ENCODE measurements at regions of chr13 and their contacts with region 1.

Region 1: DNA sequence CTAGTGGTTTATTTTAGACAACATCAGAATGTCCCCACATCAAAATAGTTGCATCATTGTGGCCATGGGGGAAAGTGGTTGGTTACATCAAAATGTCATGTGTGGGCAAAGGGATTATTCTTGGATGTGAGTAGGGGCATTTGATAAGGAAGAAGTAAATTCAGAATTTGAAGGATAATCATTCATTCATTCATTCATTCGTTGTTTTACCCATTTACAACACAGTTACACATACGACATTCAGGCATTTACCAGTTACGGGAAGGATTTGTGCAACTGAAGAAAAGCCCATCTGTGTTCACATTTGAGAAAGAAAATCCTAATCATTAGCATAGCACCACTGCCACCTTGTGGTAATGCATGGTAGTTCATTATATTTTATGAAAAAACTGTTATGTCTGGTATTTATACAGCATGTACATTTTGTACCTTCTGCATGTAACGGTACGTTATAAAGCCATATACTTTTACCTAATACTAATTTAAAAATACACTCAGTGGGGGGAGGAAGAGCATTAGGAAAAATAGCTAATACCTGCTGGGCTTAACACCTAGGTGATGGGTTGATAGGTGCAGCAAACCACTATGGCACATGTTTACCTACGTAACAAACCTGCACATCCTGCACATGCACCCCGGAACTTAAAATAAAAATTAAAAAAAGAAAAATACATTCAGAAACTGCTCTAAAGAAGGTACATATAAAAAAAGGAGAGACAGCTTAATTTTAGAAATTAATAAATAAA is 62.1 kb downstream of the DGKH start:
- DNase-seq: peak in 7 of 14 experiments; percentile 8 to 82 (median 63)
- ATAC-seq: peak; percentile 74
- H3K4me3 ChIP-seq: no peak overlapping the region
- H3K4me3 Mint-ChIP-seq: no peak overlapping the region
- H3K27ac ChIP-seq: no peak overlapping the region
- H3K27ac Mint-ChIP-seq: no peak overlapping the region
- H3K4me1 ChIP-seq: no peaks in the 10 kb centered on the region
- H3K4me1 Mint-ChIP-seq: peaks cover 7% of the 10 kb centered on the region
- H3K27me3 ChIP-seq: no peaks in the 10 kb centered on the region
- H3K27me3 Mint-ChIP-seq: no peaks in the 10 kb centered on the region
- CTCF ChIP-seq: peak; percentile 85

Region 2: GRCh38 chr13:41075034-41075433 is 1035.5 kb before region 1 on chr13:
- CTCF ChIA-PET with region 1: no interaction called
- POLR2A ChIA-PET with region 1: no interaction called
- intact Hi-C with region 1: loop called (anchors 2 to 5 kb)
- DNase-seq: peak in 13 of 14 experiments; percentile 3 to 75 (median 20)
- ATAC-seq: peak; percentile 49
- H3K4me3 ChIP-seq: no peak overlapping the region
- H3K4me3 Mint-ChIP-seq: no peak overlapping the region
- H3K27ac ChIP-seq: no peak overlapping the region
- H3K27ac Mint-ChIP-seq: no peak overlapping the region
- H3K4me1 ChIP-seq: no peaks in the 10 kb centered on the region
- H3K4me1 Mint-ChIP-seq: no peaks in the 10 kb centered on the region
- H3K27me3 ChIP-seq: no peaks in the 10 kb centered on the region
- H3K27me3 Mint-ChIP-seq: no peaks in the 10 kb centered on the region
- CTCF ChIP-seq: peak; percentile 53

Region 3: GRCh38 chr13:41345914-41346589 is 764.5 kb before region 1 on chr13:
- CTCF ChIA-PET with region 1: no interaction called
- POLR2A ChIA-PET with region 1: no interaction called
- intact Hi-C with region 1: loop called (anchors 5 kb)
- DNase-seq: no peak
- ATAC-seq: no peak
- H3K4me3 ChIP-seq: no peak overlapping the region
- H3K4me3 Mint-ChIP-seq: peak overlapping the region; percentile 31
- H3K27ac ChIP-seq: peak overlapping the region in 1 of 2 donors; percentile 5
- H3K27ac Mint-ChIP-seq: peak overlapping the region; percentile 82
- H3K4me1 ChIP-seq: peaks cover 15% of the 10 kb centered on the region
- H3K4me1 Mint-ChIP-seq: peaks cover 56% of the 10 kb centered on the region
- H3K27me3 ChIP-seq: no peaks in the 10 kb centered on the region
- H3K27me3 Mint-ChIP-seq: no peaks in the 10 kb centered on the region
- CTCF ChIP-seq: no peak

Region 4: GRCh38 chr13:41352935-41353840 is 757.4 kb before region 1 on chr13:
- CTCF ChIA-PET with region 1: no interaction called
- POLR2A ChIA-PET with region 1: no interaction called
- intact Hi-C with region 1: loop called (anchors 5 kb)
- DNase-seq: peak; percentile 15 to 85 (median 46)
- ATAC-seq: peak; percentile 51
- H3K4me3 ChIP-seq: no peak overlapping the region
- H3K4me3 Mint-ChIP-seq: peak overlapping the region; percentile 44
- H3K27ac ChIP-seq: peak overlapping the region; percentile 25 to 56
- H3K27ac Mint-ChIP-seq: peak overlapping the region; percentile 72
- H3K4me1 ChIP-seq: peaks cover 34% of the 10 kb centered on the region
- H3K4me1 Mint-ChIP-seq: peaks cover 57% of the 10 kb centered on the region
- H3K27me3 ChIP-seq: no peaks in the 10 kb centered on the region
- H3K27me3 Mint-ChIP-seq: no peaks in the 10 kb centered on the region
- CTCF ChIP-seq: peak; percentile 76

Region 5: GRCh38 chr13:41411522-41411921 is 699.1 kb before region 1 on chr13:
- CTCF ChIA-PET with region 1: no interaction called
- POLR2A ChIA-PET with region 1: no interaction called
- intact Hi-C with region 1: loop called (anchors 5 to 10 kb)
- DNase-seq: peak in 9 of 14 experiments; percentile 9 to 75 (median 20)
- ATAC-seq: no peak
- H3K4me3 ChIP-seq: no peak overlapping the region
- H3K4me3 Mint-ChIP-seq: no peak overlapping the region
- H3K27ac ChIP-seq: no peak overlapping the region
- H3K27ac Mint-ChIP-seq: no peak overlapping the region
- H3K4me1 ChIP-seq: peaks cover 4% of the 10 kb centered on the region
- H3K4me1 Mint-ChIP-seq: peaks cover 5% of the 10 kb centered on the region
- H3K27me3 ChIP-seq: no peaks in the 10 kb centered on the region
- H3K27me3 Mint-ChIP-seq: no peaks in the 10 kb centered on the region
- CTCF ChIP-seq: peak; percentile 49

Region 6: GRCh38 chr13:41668130-41668757 is 442.3 kb before region 1 on chr13:
- CTCF ChIA-PET with region 1: interaction called, 10 read pairs
- POLR2A ChIA-PET with region 1: interaction called, 4 read pairs
- intact Hi-C with region 1: loop called (anchors 1 kb)
- DNase-seq: peak in 8 of 14 experiments; percentile 0 to 74 (median 28)
- ATAC-seq: peak; percentile 75
- H3K4me3 ChIP-seq: no peak overlapping the region
- H3K4me3 Mint-ChIP-seq: no peak overlapping the region
- H3K27ac ChIP-seq: no peak overlapping the region
- H3K27ac Mint-ChIP-seq: no peak overlapping the region
- H3K4me1 ChIP-seq: no peaks in the 10 kb centered on the region
- H3K4me1 Mint-ChIP-seq: no peaks in the 10 kb centered on the region
- H3K27me3 ChIP-seq: no peaks in the 10 kb centered on the region
- H3K27me3 Mint-ChIP-seq: no peaks in the 10 kb centered on the region
- CTCF ChIP-seq: peak; percentile 69

Region 7: DNA sequence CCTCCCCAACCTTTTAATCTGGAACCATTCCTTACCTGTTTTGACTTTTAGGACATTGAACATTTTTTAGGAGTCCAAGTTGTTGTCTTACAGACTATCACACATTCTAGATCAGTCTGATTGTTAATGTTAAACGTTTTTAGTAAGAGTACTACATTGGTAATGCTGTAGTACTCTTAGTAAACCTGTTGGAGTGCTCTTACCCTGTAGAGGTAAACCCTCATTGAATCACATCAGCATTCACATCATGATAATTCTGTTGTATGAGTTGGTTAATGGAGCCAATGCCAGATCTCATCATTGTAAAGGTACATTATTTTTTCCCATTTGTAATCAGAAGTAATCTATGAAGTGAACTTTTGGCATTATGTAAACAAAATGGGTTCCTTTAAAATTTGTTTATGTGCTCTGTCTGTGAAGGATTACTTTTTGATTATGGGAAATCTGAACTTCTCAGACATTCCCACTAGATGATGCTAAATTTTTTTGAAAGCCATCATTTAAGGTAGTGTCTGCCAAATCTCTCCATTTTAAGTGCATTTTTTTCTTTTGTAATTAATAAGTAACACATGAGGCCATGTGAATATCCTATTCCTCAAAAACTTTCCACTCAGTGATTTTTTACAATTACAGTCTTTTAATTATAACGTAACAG is 204.9 kb before region 1 on chr13:
- CTCF ChIA-PET with region 1: interaction called, 6 read pairs
- POLR2A ChIA-PET with region 1: interaction called, 3 read pairs
- intact Hi-C with region 1: loop called (anchors 1 to 2 kb)
- DNase-seq: peak in 3 of 14 experiments; percentile 49 to 60 (median 53)
- ATAC-seq: peak; percentile 99
- H3K4me3 ChIP-seq: no peak overlapping the region
- H3K4me3 Mint-ChIP-seq: no peak overlapping the region
- H3K27ac ChIP-seq: no peak overlapping the region
- H3K27ac Mint-ChIP-seq: no peak overlapping the region
- H3K4me1 ChIP-seq: no peaks in the 10 kb centered on the region
- H3K4me1 Mint-ChIP-seq: peaks cover 3% of the 10 kb centered on the region
- H3K27me3 ChIP-seq: no peaks in the 10 kb centered on the region
- H3K27me3 Mint-ChIP-seq: no peaks in the 10 kb centered on the region
- CTCF ChIP-seq: peak; percentile 70

Region 8: GRCh38 chr13:42170029-42170428 is 59.4 kb after region 1 on chr13:
- CTCF ChIA-PET with region 1: no interaction called
- POLR2A ChIA-PET with region 1: no interaction called
- intact Hi-C with region 1: no loop called
- DNase-seq: no peak
- ATAC-seq: no peak
- H3K4me3 ChIP-seq: no peak overlapping the region
- H3K4me3 Mint-ChIP-seq: no peak overlapping the region
- H3K27ac ChIP-seq: no peak overlapping the region
- H3K27ac Mint-ChIP-seq: no peak overlapping the region
- H3K4me1 ChIP-seq: no peaks in the 10 kb centered on the region
- H3K4me1 Mint-ChIP-seq: no peaks in the 10 kb centered on the region
- H3K27me3 ChIP-seq: no peaks in the 10 kb centered on the region
- H3K27me3 Mint-ChIP-seq: no peaks in the 10 kb centered on the region
- CTCF ChIP-seq: no peak

Region 9: GRCh38 chr13:42215578-42216421 is 105.2 kb after region 1 on chr13:
- CTCF ChIA-PET with region 1: no interaction called
- POLR2A ChIA-PET with region 1: no interaction called
- intact Hi-C with region 1: no loop called
- DNase-seq: peak in 5 of 14 experiments; percentile 1 to 33 (median 28)
- ATAC-seq: no peak
- H3K4me3 ChIP-seq: no peak overlapping the region
- H3K4me3 Mint-ChIP-seq: no peak overlapping the region
- H3K27ac ChIP-seq: no peak overlapping the region
- H3K27ac Mint-ChIP-seq: no peak overlapping the region
- H3K4me1 ChIP-seq: no peaks in the 10 kb centered on the region
- H3K4me1 Mint-ChIP-seq: no peaks in the 10 kb centered on the region
- H3K27me3 ChIP-seq: no peaks in the 10 kb centered on the region
- H3K27me3 Mint-ChIP-seq: no peaks in the 10 kb centered on the region
- CTCF ChIP-seq: peak; percentile 32

Measured in CD4-positive, alpha-beta T cell (primary cell).